ENCODE measurements at regions of chr1 and their contacts with region 1.

Region 1: DNA sequence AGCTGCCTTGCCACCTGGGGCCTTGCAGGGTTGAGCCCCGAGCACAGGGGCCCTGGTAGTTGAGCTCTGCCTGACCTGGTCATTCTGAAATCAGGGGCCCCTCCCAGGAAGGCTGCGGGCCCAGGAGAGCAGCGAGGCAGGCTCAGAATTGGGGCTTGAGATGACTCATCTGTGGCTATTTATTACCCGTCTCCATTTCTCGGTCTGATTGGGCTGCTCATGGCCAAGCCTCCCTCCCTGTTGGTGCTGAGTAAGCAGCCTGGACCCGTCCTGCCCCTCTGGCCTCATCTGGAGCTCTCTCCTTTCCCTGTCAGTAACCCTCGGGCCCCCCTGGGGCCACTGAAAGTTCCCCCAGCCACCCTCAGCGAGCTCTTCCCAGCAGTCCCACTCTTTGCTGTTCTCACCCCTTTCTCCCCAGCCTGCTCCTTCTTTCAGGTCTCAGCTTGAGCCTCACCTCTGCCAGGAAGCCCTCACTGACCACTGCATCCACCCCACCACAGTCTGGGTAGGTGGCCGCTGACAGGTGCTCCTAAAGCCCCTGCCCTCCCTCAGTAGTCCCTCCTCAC is 11.0 kb upstream of the TNFRSF8 start:
- DNase-seq: peak; percentile 76
- H3K4me3 Mint-ChIP-seq: peak overlapping the region; percentile 32
- H3K27ac Mint-ChIP-seq: peak overlapping the region; percentile 78
- H3K4me1 Mint-ChIP-seq: peaks cover 62% of the 10 kb centered on the region
- H3K27me3 Mint-ChIP-seq: no peaks in the 10 kb centered on the region

Region 2: GRCh38 chr1:11134251-11134897 is 917.7 kb before region 1 on chr1:
- CTCF ChIA-PET with region 1: no interaction called
- POLR2A ChIA-PET with region 1: no interaction called
- DNase-seq: no peak
- H3K4me3 Mint-ChIP-seq: no peak overlapping the region
- H3K27ac Mint-ChIP-seq: no peak overlapping the region
- H3K4me1 Mint-ChIP-seq: no peaks in the 10 kb centered on the region
- H3K27me3 Mint-ChIP-seq: no peaks in the 10 kb centered on the region

Region 3: DNA sequence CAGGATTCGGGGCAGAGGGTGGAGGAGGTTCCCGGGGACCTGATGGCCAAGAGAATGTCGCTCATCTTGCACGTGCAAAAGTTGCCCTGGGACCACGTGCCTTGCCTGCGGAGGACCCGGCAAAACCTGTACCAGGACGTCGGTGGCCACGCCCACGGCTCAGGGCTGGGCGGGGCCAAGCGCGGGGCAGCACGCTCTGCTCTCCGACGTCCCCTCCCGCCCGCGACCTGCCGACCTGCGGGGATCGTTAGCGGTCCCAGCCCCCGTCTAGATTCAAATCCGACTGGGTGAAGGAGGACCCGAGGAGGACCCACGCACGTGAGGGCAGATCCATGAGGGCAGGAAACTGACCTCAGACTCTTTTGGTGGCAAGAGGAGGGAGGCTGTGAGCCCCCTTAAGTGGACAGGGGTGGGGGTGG is 290.1 kb before region 1 on chr1 and contains the start of gene C1orf167:
- CTCF ChIA-PET with region 1: no interaction called
- POLR2A ChIA-PET with region 1: no interaction called
- DNase-seq: peak; percentile 32
- H3K4me3 Mint-ChIP-seq: no peak within 1 kb of the TSS
- H3K27ac Mint-ChIP-seq: no peak within 1 kb of the TSS
- H3K4me1 Mint-ChIP-seq: no peaks in the 10 kb centered on the region
- H3K27me3 Mint-ChIP-seq: peaks cover 32% of the 10 kb centered on the region
- total RNA-seq, gene C1orf167: 0.25 TPM in 1 of 2 experiments, not detected in the other

Region 4: GRCh38 chr1:11893907-11894251 is 158.2 kb before region 1 on chr1:
- CTCF ChIA-PET with region 1: no interaction called
- POLR2A ChIA-PET with region 1: no interaction called
- DNase-seq: peak; percentile 74
- H3K4me3 Mint-ChIP-seq: no peak overlapping the region
- H3K27ac Mint-ChIP-seq: no peak overlapping the region
- H3K4me1 Mint-ChIP-seq: no peaks in the 10 kb centered on the region
- H3K27me3 Mint-ChIP-seq: peaks cover 37% of the 10 kb centered on the region

Region 5: GRCh38 chr1:12040457-12041051 is 11.5 kb before region 1 on chr1:
- CTCF ChIA-PET with region 1: interaction called, 3 read pairs
- POLR2A ChIA-PET with region 1: interaction called, 44 read pairs
- DNase-seq: no peak
- H3K4me3 Mint-ChIP-seq: no peak overlapping the region
- H3K27ac Mint-ChIP-seq: peak overlapping the region; percentile 69
- H3K4me1 Mint-ChIP-seq: peaks cover 46% of the 10 kb centered on the region
- H3K27me3 Mint-ChIP-seq: peaks cover 1% of the 10 kb centered on the region

Measured in activated CD4-positive, alpha-beta memory T cell treated with anti-CD3 and anti-CD28 coated beads, Interleukin-2, amount 10 ng/mL, durations not matched to agents 7 days and 5 days (primary cell).